Caki2 (cell line): ENCODE measurements at regions of chr1 and their contacts with region 1.

Region 1: GRCh38 chr1:59146651-59147358 is 150.1 kb upstream of the FGGY start:
- DNase-seq: peak; percentile 88

Region 2: GRCh38 chr1:58823481-58824010 is 323.3 kb before region 1 on chr1:
- in situ Hi-C with region 1: loop called (anchors 10 kb)
- DNase-seq: peak; percentile 81

Region 3: GRCh38 chr1:59041646-59042277 is 105.0 kb before region 1 on chr1:
- in situ Hi-C with region 1: no loop called
- DNase-seq: no peak

Region 4: DNA sequence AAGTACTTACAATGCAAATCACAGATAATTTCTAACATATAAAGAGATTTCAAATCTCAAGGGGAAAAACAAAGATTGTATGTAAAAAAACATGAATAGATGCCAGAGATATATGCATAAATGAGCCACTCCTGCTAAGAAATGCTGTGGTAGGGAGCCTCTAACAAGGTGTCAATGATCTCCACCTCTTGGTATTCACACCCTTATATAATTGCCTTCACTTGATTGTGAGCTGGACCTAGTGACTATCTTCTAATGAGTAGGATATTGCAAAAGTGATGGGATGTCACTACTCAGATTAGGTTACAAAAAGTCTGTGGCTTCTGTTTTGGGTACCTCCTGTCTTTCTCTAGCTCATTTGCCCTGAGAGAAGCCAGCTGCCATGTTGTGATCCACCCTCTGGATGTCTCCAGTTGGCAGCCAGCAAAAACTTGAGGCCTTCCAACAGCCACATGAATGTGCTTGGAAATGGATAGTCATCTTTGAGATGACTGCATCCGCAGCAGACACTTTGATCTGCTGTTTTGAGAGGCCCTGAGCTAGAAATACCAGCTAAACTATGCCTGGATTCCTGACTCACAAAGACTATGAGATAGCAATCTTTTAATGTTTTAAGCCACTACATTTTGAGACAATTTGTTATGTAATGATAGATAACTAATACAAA is 46.0 kb before region 1 on chr1:
- in situ Hi-C with region 1: no loop called
- DNase-seq: no peak

Region 5: DNA sequence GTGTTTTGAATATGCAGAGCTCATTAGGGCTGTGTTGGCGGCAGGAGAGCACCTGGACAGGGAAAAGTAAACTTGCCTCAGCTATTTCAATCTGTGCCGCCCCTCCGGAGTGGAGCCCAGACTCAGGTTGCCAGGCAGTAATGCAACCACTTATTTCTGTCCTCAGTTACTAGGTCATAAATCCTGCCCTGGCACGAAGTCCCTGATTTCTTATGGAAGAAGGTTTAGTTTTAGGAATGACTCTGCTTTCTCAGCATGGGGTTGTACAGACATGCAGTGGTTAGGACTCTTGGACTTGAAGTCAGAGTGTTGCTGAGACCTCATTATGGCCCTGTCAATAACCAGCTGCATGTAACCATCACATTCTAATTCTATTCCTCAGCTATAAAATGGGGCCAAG is 51.8 kb after region 1 on chr1:
- in situ Hi-C with region 1: no loop called
- DNase-seq: no peak